Dendritic cell treated with granulocyte-macrophage colony-stimulating factor and Interleukin-4, amounts not matched to agents 40 ng/mL and 50 ng/mL, for 4 days (primary cell): ENCODE measurements at regions of chr17 and their contacts with region 1.

Region 1: DNA sequence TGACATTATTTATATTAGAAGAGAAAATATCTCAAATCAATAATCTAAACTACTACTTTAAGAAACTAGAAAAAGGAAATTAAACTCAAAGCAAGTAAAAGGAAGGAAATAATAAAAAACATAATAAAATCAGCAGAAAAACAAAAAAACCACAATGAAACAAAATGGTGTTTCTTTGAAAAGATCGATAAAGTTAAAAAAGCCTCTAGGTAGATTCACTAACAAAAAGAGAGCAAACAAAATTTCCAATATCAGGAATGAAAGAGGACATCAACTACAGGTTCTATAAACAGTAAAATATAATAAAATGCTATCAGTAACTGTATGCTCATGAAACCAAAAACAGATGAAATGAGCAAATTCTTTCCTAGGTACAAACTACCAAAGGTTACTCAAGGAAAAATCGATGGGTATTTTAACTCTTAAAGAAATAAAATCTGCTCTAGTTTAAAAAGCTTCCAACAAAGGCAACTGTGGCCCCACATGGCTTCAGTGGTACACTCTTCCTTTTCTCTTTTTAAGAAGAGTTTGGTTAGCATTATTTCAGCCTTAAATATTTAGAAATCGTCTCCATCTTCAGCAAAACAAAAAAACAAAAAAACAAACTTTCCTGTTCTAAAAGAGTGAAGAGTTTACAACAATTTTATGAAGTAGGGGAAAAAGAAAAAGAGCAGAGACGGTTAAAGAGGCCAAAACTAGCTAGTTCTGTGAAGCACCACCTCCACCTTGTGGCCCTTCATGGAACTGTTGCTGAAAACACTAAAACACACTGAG is 102.2 kb downstream of the TRIM37 start:
- H3K4me3 Mint-ChIP-seq: no peak overlapping the region
- H3K27ac Mint-ChIP-seq: no peak overlapping the region
- H3K4me1 Mint-ChIP-seq: peaks cover 24% of the 10 kb centered on the region
- H3K27me3 Mint-ChIP-seq: no peaks in the 10 kb centered on the region

Region 2: GRCh38 chr17:58517734-58518609 is 486.6 kb before region 1 on chr17:
- intact Hi-C with region 1: loop called (anchors 1 kb)
- H3K4me3 Mint-ChIP-seq: peak overlapping the region; percentile 85
- H3K27ac Mint-ChIP-seq: peak overlapping the region; percentile 97
- H3K4me1 Mint-ChIP-seq: peaks cover 47% of the 10 kb centered on the region
- H3K27me3 Mint-ChIP-seq: peaks cover 10% of the 10 kb centered on the region

Region 3: GRCh38 chr17:58577642-58578091 is 426.9 kb before region 1 on chr17:
- intact Hi-C with region 1: loop called (anchors 2 kb)
- H3K4me3 Mint-ChIP-seq: no peak overlapping the region
- H3K27ac Mint-ChIP-seq: no peak overlapping the region
- H3K4me1 Mint-ChIP-seq: no peaks in the 10 kb centered on the region
- H3K27me3 Mint-ChIP-seq: no peaks in the 10 kb centered on the region

Region 4: GRCh38 chr17:58710936-58711775 is 293.4 kb before region 1 on chr17:
- intact Hi-C with region 1: loop called (anchors 1 kb)
- H3K4me3 Mint-ChIP-seq: no peak overlapping the region
- H3K27ac Mint-ChIP-seq: no peak overlapping the region
- H3K4me1 Mint-ChIP-seq: peaks cover 10% of the 10 kb centered on the region
- H3K27me3 Mint-ChIP-seq: no peaks in the 10 kb centered on the region